PC-9 (cell line): ENCODE measurements at regions of chr7 and their contacts with region 1.

Region 1: DNA sequence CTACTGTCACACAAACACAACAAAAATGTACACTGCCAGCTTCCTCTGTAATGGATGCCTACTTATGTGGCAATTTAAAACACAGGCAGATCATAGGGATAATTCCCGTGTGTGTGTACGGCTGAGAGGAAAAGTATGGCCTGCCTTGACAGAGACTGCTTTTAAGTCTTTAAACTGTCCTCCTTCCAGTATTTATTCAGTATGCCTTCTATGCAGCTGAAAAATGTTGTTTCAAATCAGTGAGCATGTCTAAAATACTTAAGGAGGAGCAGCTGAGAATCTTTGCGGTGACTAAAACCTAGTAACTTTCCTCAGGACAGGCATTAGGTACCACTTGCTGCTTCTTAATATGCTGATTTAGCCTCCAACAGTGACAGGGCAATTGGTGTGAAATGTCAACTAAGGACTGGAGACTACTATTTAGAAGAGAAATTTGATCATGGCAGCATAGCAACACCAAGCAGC is 126.3 kb downstream of the CACNA2D1 start:
- DNase-seq: no peak
- H3K4me3 ChIP-seq: no peak overlapping the region
- H3K27ac ChIP-seq: no peak overlapping the region
- H3K4me1 ChIP-seq: no peaks in the 10 kb centered on the region
- H3K27me3 ChIP-seq: no peaks in the 10 kb centered on the region
- CTCF ChIP-seq: no peak

Region 2: GRCh38 chr7:82131215-82131614 is 186.1 kb before region 1 on chr7:
- CTCF ChIA-PET with region 1: no interaction called
- POLR2A ChIA-PET with region 1: interaction called, 10 read pairs
- intact Hi-C with region 1: no loop called
- DNase-seq: no peak
- H3K4me3 ChIP-seq: no peak overlapping the region
- H3K27ac ChIP-seq: no peak overlapping the region
- H3K4me1 ChIP-seq: no peaks in the 10 kb centered on the region
- H3K27me3 ChIP-seq: no peaks in the 10 kb centered on the region
- CTCF ChIP-seq: no peak